Activated CD4-positive, alpha-beta T cell treated with anti-CD3 and anti-CD28 coated beads for 36 hours (primary cell): ENCODE measurements at regions of chr19 and their contacts with region 1.

Region 1: GRCh38 chr19:57642396-57643046 is 9.6 kb downstream of the ZNF211 start:
- DNase-seq: no peak
- ATAC-seq: no peak
- H3K4me3 Mint-ChIP-seq: no peak overlapping the region
- H3K27ac Mint-ChIP-seq: no peak overlapping the region
- H3K4me1 Mint-ChIP-seq: no peaks in the 10 kb centered on the region
- H3K27me3 Mint-ChIP-seq: no peaks in the 10 kb centered on the region

Region 2: DNA sequence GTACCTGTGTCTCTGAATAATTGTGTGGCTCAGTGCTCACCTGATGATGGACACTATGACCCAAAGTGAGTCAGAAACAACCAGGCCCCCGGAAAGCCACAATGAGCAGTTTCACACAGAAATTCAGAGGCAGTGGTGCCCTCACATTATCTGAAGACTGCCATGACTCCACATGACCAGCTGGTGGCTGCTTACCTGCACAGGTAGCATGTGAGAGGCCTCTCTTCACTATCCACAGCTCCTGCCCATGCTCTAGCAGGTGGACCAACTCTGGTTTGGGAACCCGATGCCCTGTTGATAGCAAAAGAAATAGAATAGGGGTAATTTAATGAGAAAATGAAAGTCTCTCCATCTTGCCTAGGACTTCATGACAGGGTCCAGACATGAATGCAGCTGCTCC is 90.1 kb before region 1 on chr19:
- CTCF ChIA-PET with region 1: no interaction called
- POLR2A ChIA-PET with region 1: no interaction called
- intact Hi-C with region 1: no loop called
- DNase-seq: no peak
- ATAC-seq: no peak
- H3K4me3 Mint-ChIP-seq: no peak overlapping the region
- H3K27ac Mint-ChIP-seq: no peak overlapping the region
- H3K4me1 Mint-ChIP-seq: no peaks in the 10 kb centered on the region
- H3K27me3 Mint-ChIP-seq: no peaks in the 10 kb centered on the region

Region 3: DNA sequence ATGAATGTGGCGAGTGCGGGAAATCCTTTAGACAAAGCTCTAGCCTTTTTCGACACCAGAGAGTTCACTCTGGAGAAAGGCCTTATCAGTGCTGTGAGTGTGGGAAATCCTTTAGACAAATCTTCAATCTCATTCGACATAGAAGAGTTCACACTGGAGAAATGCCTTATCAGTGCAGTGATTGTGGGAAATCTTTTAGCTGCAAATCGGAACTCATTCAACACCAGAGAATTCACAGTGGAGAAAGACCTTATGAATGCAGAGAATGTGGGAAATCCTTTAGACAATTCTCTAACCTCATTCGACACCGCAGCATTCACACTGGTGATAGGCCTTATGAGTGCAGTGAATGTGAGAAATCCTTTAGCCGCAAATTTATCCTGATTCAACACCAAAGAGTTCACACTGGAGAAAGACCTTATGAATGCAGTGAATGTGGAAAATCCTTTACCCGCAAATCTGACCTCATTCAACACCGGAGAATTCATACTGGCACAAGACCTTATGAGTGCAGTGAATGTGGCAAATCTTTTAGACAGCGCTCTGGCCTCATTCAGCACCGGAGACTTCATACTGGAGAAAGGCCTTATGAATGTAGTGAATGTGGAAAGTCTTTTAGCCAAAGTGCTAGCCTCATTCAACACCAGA is 45.0 kb after region 1 on chr19:
- CTCF ChIA-PET with region 1: no interaction called
- POLR2A ChIA-PET with region 1: no interaction called
- intact Hi-C with region 1: loop called in 1 of 2 experiments (anchors 1 kb)
- DNase-seq: no peak
- ATAC-seq: no peak
- H3K4me3 Mint-ChIP-seq: no peak overlapping the region
- H3K27ac Mint-ChIP-seq: no peak overlapping the region
- H3K4me1 Mint-ChIP-seq: peaks cover 22% of the 10 kb centered on the region
- H3K27me3 Mint-ChIP-seq: no peaks in the 10 kb centered on the region